ENCODE measurements at regions of chr6 and their contacts with region 1.

Region 1: GRCh38 chr6:166308033-166308768 is at the start of gene PRR18:
- DNase-seq: peak; percentile 37
- ATAC-seq: peak; percentile 65
- H3K4me3 Mint-ChIP-seq: peak within 1 kb of the TSS; percentile 78
- H3K27ac Mint-ChIP-seq: no peak within 1 kb of the TSS
- H3K4me1 Mint-ChIP-seq: peaks cover 8% of the 10 kb centered on the region
- H3K27me3 Mint-ChIP-seq: peaks cover 28% of the 10 kb centered on the region
- CTCF ChIP-seq: no peak
- total RNA-seq, gene PRR18: 0.10 TPM in 1 of 2 replicates, not detected in the other

Region 2: DNA sequence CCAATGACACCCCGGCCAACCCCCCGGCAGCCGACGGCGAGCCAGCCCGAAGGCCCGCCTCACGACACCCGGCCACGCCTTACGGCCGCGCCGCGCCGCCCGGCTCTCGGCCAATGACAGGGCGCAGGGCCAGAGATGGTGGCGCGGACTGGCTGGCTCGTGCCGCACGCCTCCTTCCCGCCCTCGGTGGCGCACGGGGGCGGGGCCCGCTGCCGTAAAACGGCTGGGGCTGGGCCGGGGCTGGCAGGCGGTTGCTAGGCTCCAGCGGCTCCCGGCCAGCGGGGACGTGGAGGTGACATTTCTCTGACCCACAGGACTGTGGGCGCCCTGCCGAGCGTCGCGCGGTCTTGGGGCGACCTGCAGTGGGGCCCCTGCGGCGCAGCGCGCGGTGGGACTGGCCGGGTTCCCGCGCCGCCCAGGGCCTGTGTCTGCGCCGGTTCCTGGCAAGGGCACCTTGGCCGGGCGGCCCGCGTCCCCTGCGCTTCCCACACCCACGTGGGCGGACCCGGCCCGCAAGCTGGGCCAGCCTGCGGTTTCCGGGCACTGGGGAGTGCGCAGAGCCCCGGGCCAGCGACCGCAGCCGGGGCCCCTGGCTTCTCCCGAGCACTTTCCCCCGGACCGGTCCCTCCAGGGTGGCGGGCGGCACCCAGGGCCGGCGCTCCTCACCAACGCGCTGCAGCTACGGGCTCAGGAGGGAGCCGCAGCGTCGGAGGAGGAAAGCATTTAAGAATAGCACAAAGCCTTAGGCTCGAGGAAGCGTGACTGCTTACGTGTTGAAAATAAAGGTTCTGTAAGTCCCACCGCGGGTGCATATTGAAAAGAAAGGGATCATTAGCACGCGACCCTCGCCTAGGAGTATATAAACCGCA is 75.0 kb after region 1 on chr6 and contains the start of gene MPC1:
- CTCF ChIA-PET with region 1: interaction called, 31 read pairs
- POLR2A ChIA-PET with region 1: no interaction called
- intact Hi-C with region 1: loop called (anchors 1 kb)
- DNase-seq: peak; percentile 96
- ATAC-seq: peak; percentile 94
- H3K4me3 Mint-ChIP-seq: peak within 1 kb of the TSS; percentile 92
- H3K27ac Mint-ChIP-seq: peak within 1 kb of the TSS; percentile 76
- H3K4me1 Mint-ChIP-seq: peaks cover 15% of the 10 kb centered on the region
- H3K27me3 Mint-ChIP-seq: no peaks in the 10 kb centered on the region
- CTCF ChIP-seq: no peak
- total RNA-seq, gene MPC1: 16.7 and 17.3 TPM in 2 replicates